ENCODE measurements at regions of chr2 and their contacts with region 1.

Region 1: GRCh38 chr2:209960676-209961630 is 41.5 kb upstream of the RPE start:
- DNase-seq: peak; percentile 39 to 53
- H3K4me3 ChIP-seq: peak overlapping the region in 1 of 4 experiments; percentile 7; a peak in 1 of 8 replicates
- H3K27ac ChIP-seq: no peak overlapping the region
- H3K4me1 ChIP-seq: peaks cover 0 to 17% (median 2%) of the 10 kb centered on the region in 4 experiments; a peak in 4 of 7 replicates
- H3K27me3 ChIP-seq: peaks cover 0 to 10% (median 3%) of the 10 kb centered on the region in 4 experiments; a peak in 4 of 7 replicates
- CTCF ChIP-seq: peak; percentile 18 to 72 (median 60)
- EP300 ChIP-seq: no peak
- POLR2A ChIP-seq: no peak
- RAD21 ChIP-seq: peak; percentile 87 to 90

Region 2: DNA sequence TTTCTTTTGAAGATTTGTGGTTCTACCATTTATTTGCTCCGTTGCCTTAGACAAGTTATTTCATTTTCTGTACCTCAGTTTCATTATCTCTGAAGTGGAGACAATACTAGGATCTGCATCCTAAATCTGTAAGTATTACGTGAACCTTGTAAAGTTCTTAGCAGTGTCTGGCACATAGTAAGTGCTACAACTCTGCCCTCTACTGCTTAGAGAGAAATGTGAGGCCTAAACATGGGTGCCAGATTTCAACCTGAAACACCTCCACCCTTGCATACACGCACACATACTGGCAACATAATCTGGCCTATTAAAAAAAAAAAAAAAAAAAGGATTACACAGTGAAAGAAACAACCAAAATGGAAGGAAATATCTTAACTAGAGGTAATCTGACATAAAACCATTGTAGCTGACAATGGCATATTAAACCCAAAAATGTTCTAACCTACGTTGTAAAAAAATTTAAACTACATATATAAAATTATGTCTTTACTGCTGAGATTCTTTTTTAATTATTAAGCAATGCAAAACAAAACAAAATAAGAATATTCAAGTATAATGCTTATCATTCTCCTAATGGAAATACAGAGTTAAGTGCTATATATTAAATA is 404.5 kb before region 1 on chr2:
- CTCF ChIA-PET with region 1: interaction called, 11 read pairs
- POLR2A ChIA-PET with region 1: no interaction called
- DNase-seq: no peak
- H3K4me3 ChIP-seq: no peak overlapping the region
- H3K27ac ChIP-seq: no peak overlapping the region
- H3K4me1 ChIP-seq: no peaks in the 10 kb centered on the region
- H3K27me3 ChIP-seq: no peaks in the 10 kb centered on the region
- CTCF ChIP-seq: peak in 2 of 3 experiments; percentile 46 to 58; a peak in 2 of 4 replicates
- EP300 ChIP-seq: no peak
- POLR2A ChIP-seq: no peak
- RAD21 ChIP-seq: peak; percentile 70 to 80

Region 3: DNA sequence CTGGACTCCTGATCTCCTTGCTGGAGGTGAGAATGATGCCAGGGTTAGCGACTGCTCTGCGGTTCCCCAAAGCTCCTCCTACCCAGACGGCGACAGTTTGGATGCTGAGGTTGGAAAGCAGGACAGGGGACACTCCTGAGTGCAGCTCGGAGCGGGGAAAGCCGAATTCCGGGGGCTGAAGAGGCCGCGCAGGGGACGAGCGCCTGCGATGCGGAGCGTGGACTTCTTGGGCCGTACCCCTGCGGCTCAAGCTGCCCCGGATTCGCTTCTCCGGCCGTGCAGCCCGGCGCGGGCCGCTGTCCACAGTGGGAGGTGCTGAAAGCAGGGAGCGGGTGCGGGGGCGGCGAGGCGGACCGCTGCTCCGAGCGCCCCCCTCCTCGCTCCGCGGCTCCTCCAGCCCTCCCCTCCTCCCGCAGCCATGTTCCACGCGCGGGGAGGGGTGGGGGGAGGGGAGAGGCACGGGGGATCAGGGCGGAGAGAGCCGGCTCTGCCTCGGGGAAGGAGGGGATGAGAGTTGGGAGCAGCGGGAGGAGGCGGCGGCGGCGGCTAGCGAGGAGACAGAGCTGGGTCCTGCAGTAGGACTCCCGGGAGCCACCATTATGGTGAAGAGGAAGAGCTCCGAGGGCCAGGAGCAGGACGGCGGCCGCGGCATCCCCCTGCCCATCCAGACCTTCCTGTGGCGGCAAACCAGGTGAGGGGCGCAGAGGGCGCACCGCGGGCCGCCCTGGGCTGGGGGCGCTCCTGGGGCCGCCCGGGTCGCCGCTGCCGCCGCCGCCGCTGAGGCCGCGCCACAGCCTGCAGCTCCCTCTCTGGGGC is 189.3 kb before region 1 on chr2 and contains the start of gene UNC80:
- CTCF ChIA-PET with region 1: interaction called, 11 read pairs
- POLR2A ChIA-PET with region 1: no interaction called
- DNase-seq: peak in 1 of 2 experiments; percentile 95
- H3K4me3 ChIP-seq: peak within 1 kb of the TSS; percentile 23 to 82 (median 50)
- H3K27ac ChIP-seq: no peak within 1 kb of the TSS
- H3K4me1 ChIP-seq: peaks cover 0 to 2% (median 0%) of the 10 kb centered on the region in 4 experiments; a peak in 3 of 7 replicates
- H3K27me3 ChIP-seq: peaks cover 2 to 32% (median 15%) of the 10 kb centered on the region in 4 experiments
- CTCF ChIP-seq: no peak
- EP300 ChIP-seq: no peak; a peak in 1 of 3 replicates
- POLR2A ChIP-seq: no peak
- RAD21 ChIP-seq: peak in 1 of 2 experiments; percentile 31; a peak in 2 of 4 replicates
- total RNA-seq, gene UNC80: 0.38 and 0.56 TPM in 2 replicates

Region 4: GRCh38 chr2:209988010-209988409 is 27.1 kb after region 1 on chr2:
- CTCF ChIA-PET with region 1: no interaction called
- POLR2A ChIA-PET with region 1: no interaction called
- DNase-seq: no peak
- H3K4me3 ChIP-seq: no peak overlapping the region
- H3K27ac ChIP-seq: no peak overlapping the region
- H3K4me1 ChIP-seq: no peaks in the 10 kb centered on the region
- H3K27me3 ChIP-seq: no peaks in the 10 kb centered on the region
- CTCF ChIP-seq: no peak
- EP300 ChIP-seq: no peak
- POLR2A ChIP-seq: no peak
- RAD21 ChIP-seq: no peak